ENCODE measurements at regions of chr6 and their contacts with region 1.

Region 1: DNA sequence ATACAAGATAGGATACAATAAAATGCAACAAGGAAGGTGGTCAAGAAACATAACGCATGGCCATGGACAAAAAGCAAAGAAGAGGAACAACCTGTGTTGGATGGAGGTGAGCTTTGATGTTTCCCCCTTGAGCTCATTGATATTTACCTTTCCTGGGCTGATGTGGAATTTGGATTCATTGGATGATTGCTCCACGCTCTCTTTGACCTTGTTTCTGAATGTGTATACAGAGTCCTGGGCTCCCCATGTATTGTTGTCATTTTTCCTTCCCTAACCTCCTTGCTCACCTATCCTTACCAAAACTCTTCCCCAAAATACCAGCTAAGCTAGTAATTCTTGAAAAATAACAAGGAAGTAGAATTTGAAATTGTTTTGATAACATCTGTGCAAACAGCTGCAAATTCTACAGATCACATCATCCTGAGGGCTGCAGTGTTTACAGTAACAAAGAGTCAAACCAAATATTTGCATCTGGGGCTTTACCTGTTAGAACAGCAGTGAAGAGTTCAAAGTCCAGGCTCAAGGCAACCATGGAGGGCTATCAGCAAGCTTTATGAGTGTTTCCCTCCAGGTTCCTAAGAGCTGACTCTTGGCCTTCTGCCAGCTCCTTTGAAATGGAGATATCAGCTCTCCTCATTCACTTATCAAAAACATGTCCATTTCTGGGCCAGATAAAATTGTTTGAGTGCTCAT is 214.3 kb upstream of the MARCKS start:
- DNase-seq: no peak
- H3K4me3 ChIP-seq: no peak overlapping the region
- H3K27ac ChIP-seq: no peak overlapping the region
- H3K4me1 ChIP-seq: no peaks in the 10 kb centered on the region
- H3K27me3 ChIP-seq: no peaks in the 10 kb centered on the region
- CTCF ChIP-seq: no peak

Region 2: GRCh38 chr6:112502351-112503090 is 1140.3 kb before region 1 on chr6:
- CTCF ChIA-PET with region 1: interaction called, 10 read pairs
- POLR2A ChIA-PET with region 1: no interaction called
- intact Hi-C with region 1: no loop called
- DNase-seq: peak; percentile 40
- H3K4me3 ChIP-seq: no peak overlapping the region
- H3K27ac ChIP-seq: no peak overlapping the region
- H3K4me1 ChIP-seq: peaks cover 21% of the 10 kb centered on the region
- H3K27me3 ChIP-seq: no peaks in the 10 kb centered on the region
- CTCF ChIP-seq: peak; percentile 49; the same call in 1 of the 2 replicates

Region 3: DNA sequence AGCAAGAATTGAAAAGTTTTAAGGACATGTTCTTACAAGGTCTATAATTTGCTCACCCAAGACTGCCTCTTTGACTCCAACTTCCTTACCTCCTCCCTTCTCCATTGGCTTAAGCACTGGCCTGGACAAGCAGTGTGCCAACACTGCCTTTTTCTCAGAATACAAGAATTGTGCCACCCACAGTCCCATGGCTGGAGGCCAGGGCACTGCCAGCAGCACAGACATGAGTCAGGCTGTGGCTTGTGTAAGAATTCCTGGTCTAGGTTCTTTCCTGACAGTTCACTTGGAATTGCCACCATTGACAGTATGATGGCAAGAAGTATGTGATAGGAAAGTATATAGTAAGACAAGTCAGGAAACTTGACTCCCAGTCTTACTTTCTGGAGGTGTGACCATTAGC is 11.5 kb after region 1 on chr6:
- CTCF ChIA-PET with region 1: interaction called, 14 read pairs
- POLR2A ChIA-PET with region 1: no interaction called
- intact Hi-C with region 1: no loop called
- DNase-seq: no peak
- H3K4me3 ChIP-seq: no peak overlapping the region
- H3K27ac ChIP-seq: no peak overlapping the region
- H3K4me1 ChIP-seq: no peaks in the 10 kb centered on the region
- H3K27me3 ChIP-seq: no peaks in the 10 kb centered on the region
- CTCF ChIP-seq: no peak

Region 4: DNA sequence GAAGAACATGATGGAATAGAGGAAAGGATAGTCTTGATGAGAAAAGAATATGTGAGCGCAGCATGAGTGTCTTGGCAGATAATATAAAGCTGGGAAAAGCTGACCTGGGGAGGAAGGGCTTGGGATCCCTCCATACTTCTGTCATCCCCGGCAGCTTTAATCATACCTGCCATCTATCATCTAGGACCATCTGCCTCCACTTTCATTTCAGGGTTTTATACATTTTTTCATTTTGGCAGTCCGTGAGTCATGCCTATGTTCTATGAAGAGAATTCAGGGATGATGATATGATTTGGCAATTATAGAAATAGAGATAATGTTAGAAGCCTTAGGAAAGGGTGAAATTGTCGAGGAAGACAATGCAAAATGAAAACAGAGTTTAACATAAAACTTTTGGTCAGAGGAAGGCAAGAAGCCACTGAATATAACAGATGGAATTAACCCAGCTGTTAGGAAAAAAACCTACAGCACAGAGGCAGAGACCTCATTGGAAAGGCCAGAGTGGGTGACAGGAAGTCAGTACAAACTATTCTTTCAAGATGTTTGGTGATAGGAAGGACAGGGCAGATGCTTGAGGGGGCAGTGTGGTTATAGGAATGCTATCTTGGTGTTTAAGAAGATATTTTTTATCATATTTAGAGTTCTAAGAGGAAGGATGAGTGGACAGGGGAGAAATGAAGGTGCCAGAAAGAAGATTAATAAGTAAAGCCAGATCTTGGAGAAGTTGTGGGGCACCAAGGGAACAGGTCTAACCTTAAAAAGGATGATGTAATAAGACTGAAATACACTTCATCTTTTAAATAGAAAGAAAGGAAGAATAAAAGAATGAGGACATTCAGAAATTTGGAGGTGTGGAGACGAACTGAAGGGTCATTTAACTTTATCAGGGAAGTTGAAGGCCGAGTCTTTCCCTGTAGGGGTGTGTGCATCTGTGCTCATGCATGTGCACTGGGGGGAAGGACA is 252.1 kb after region 1 on chr6:
- CTCF ChIA-PET with region 1: no interaction called
- POLR2A ChIA-PET with region 1: no interaction called
- intact Hi-C with region 1: no loop called
- DNase-seq: no peak
- H3K4me3 ChIP-seq: no peak overlapping the region
- H3K27ac ChIP-seq: no peak overlapping the region
- H3K4me1 ChIP-seq: no peaks in the 10 kb centered on the region
- H3K27me3 ChIP-seq: no peaks in the 10 kb centered on the region
- CTCF ChIP-seq: no peak

Measured in A673 (cell line).